Activated B cell treated with CpG ODN at 0.5 μM for 24 hours (primary cell): ENCODE measurements at regions of chr18 and their contacts with region 1.

Region 1: GRCh38 chr18:74623047-74623816 is 25.6 kb downstream of the ZNF407 start:
- DNase-seq: no peak
- ATAC-seq: no peak
- H3K4me3 Mint-ChIP-seq: no peak overlapping the region
- H3K27ac Mint-ChIP-seq: no peak overlapping the region
- H3K4me1 Mint-ChIP-seq: peaks cover 11% of the 10 kb centered on the region
- H3K27me3 Mint-ChIP-seq: no peaks in the 10 kb centered on the region
- CTCF ChIP-seq: no peak

Region 2: DNA sequence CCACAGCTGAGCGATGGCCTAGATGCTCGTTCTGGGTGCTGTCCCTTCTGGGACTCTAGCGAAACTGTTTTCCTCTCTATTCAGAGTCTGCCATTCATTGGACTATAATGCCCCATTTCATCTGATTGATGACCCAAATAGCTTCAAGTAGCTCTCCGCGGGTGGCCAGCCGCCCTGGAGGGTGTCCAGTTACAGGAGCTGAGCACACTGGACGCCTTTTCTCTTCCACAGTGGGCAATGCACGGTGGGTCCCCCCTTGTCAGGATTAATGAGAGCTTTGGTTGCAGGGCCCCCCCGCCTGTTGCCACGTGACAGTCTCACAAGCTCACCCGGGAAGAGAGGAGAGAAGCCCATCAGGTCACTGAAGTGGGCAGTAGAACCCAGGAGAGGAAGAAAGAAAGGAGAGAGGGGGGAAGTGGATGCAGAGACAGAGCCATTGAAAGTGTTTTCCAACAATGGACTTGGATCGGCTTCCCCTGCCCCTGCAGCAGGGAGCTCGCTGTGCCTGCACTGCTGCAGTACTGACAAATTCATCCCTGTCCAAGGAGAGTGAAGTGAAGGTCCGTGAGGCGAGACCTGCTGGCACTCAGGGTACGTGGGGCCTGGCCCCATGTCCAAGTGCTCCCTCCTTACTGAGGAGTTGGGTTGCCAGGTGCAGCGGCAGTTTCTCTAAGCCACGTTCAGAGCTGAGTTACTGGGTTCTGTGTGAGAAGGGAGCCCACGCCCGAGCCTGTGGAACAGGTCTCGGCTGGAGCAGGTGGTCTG is 210.9 kb before region 1 on chr18:
- CTCF ChIA-PET with region 1: no interaction called
- POLR2A ChIA-PET with region 1: no interaction called
- intact Hi-C with region 1: no loop called
- DNase-seq: no peak
- ATAC-seq: no peak
- H3K4me3 Mint-ChIP-seq: no peak overlapping the region
- H3K27ac Mint-ChIP-seq: no peak overlapping the region
- H3K4me1 Mint-ChIP-seq: peaks cover 32% of the 10 kb centered on the region
- H3K27me3 Mint-ChIP-seq: peaks cover 11% of the 10 kb centered on the region
- CTCF ChIP-seq: no peak

Region 3: DNA sequence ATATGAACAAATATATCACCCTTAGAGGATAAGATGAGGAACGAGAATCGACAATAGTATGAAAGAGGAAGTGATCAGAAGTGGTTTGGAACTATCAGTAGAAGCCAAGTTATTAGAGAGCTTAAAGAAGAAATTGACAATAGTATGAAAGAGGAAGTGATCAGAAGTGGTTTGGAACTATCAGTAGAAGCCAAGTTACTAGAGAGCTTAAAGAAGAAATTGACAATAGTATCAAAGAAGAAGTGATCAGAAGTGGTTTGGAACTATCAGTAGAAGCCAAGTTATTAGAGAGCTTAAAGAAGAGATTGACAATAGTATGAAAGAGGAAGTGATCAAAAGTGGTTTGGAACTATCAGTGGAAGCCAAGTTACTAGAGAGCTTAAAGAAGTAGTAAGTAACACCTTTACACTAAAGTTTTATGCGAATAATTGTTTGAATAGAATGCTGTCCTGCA is 150.0 kb after region 1 on chr18:
- CTCF ChIA-PET with region 1: no interaction called
- POLR2A ChIA-PET with region 1: no interaction called
- intact Hi-C with region 1: no loop called
- DNase-seq: no peak
- ATAC-seq: peak; percentile 25
- H3K4me3 Mint-ChIP-seq: no peak overlapping the region
- H3K27ac Mint-ChIP-seq: no peak overlapping the region
- H3K4me1 Mint-ChIP-seq: peaks cover 28% of the 10 kb centered on the region
- H3K27me3 Mint-ChIP-seq: no peaks in the 10 kb centered on the region
- CTCF ChIP-seq: no peak

Region 4: GRCh38 chr18:75041586-75041985 is 418.4 kb after region 1 on chr18:
- CTCF ChIA-PET with region 1: no interaction called
- POLR2A ChIA-PET with region 1: no interaction called
- intact Hi-C with region 1: no loop called
- DNase-seq: no peak
- ATAC-seq: no peak
- H3K4me3 Mint-ChIP-seq: no peak overlapping the region
- H3K27ac Mint-ChIP-seq: no peak overlapping the region
- H3K4me1 Mint-ChIP-seq: no peaks in the 10 kb centered on the region
- H3K27me3 Mint-ChIP-seq: no peaks in the 10 kb centered on the region
- CTCF ChIP-seq: no peak

Region 5: GRCh38 chr18:75173125-75173432 is 549.8 kb after region 1 on chr18:
- CTCF ChIA-PET with region 1: no interaction called
- POLR2A ChIA-PET with region 1: no interaction called
- intact Hi-C with region 1: no loop called
- DNase-seq: no peak
- ATAC-seq: peak; percentile 89
- H3K4me3 Mint-ChIP-seq: no peak overlapping the region
- H3K27ac Mint-ChIP-seq: peak overlapping the region; percentile 2
- H3K4me1 Mint-ChIP-seq: peaks cover 14% of the 10 kb centered on the region
- H3K27me3 Mint-ChIP-seq: peaks cover 5% of the 10 kb centered on the region
- CTCF ChIP-seq: no peak

Region 6: GRCh38 chr18:76349067-76349715 is 1726.0 kb after region 1 on chr18:
- CTCF ChIA-PET with region 1: no interaction called
- POLR2A ChIA-PET with region 1: no interaction called
- intact Hi-C with region 1: loop called (anchors 1 kb)
- DNase-seq: peak; percentile 38
- ATAC-seq: peak; percentile 28
- H3K4me3 Mint-ChIP-seq: peak overlapping the region; percentile 36
- H3K27ac Mint-ChIP-seq: no peak overlapping the region
- H3K4me1 Mint-ChIP-seq: peaks cover 7% of the 10 kb centered on the region
- H3K27me3 Mint-ChIP-seq: peaks cover 3% of the 10 kb centered on the region
- CTCF ChIP-seq: no peak